ENCODE measurements at regions of chr7 and their contacts with region 1.

Region 1: DNA sequence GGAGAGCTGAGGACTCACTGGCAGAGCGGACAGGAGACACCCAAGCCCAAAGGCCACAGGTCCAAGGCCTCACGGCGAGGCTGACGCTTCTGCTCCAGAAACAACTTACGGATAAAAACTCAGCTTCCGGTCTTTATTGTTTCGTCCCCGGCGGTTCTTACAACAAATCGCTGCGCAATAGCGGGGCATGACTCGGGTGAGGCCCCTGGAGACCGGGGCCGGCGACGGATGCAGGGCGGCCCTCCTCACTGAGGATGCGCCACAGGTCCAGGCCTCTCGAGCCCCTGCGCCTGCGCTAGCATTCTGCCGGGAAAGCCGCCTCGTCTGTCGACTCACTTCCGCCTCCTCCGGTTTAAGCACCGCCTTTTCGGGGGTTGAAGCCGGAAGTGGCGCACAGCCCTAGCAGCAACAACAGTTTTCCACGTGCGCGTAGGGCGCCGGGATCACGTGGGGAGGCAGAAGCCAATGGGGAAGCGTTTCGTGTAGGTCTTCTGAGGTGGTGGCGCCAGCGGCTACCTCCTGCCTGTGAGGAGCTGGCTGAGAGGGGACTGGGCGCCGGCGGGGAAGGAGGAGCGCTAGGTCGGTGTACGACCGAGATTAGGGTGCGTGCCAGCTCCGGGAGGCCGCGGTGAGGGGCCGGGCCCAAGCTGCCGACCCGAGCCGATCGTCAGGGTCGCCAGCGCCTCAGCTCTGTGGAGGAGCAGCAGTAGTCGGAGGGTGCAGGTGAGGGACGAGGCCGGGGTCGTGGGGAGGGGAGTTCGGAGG is at the starts of genes DNAJB9 and THAP5:
- DNase-seq: peak; percentile 100
- ATAC-seq: peak; percentile 99
- total RNA-seq, gene DNAJB9: 34.4 TPM
- total RNA-seq, gene THAP5: 20.3 TPM

Region 2: GRCh38 chr7:108486291-108486966 is 83.1 kb before region 1 on chr7:
- intact Hi-C with region 1: no loop called
- DNase-seq: no peak
- ATAC-seq: no peak

Region 3: DNA sequence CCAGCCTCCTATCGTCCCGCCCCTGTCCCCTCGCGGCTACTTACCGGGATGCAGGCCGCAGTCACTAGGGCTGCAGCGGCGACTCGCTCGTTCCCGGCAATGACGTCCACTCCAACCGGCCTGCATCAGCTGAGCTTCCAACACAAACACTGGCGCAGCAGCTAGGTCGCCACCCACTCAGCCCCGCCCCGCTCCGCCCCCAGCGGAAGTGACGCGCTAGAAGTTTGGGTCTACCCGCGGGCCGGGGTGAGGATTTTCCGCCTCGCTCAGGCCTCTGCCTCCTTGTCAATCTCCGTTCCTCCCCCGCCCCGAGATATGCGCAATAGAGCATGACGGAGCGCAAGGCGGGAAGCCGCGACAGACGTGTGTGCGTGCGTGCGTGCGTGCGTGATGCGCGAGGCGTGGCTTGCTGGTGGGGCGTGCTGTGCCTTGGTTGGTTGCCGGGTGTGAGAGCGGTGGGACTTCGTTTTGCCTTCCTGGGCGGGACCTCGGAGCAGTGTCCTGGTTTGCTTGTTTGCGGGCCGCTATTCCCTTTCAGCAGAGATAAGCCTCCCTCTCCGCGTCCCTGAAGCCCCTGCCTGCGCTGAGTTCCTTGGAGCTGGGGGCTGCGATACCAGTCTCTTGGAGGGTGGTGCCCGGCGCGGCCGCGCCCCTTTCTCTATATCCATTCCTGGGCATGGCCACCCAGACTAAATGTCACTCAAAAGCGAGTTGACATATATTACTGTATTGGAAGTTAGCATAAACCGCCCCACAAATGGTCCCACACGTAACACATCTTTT is 43.4 kb before region 1 on chr7 and contains the start of gene PNPLA8:
- intact Hi-C with region 1: loop called (anchors 1 kb)
- DNase-seq: peak; percentile 100
- ATAC-seq: peak; percentile 97
- total RNA-seq, gene PNPLA8: 31.1 TPM

Region 4: GRCh38 chr7:108613112-108613759 is 43.7 kb after region 1 on chr7:
- intact Hi-C with region 1: no loop called
- DNase-seq: no peak
- ATAC-seq: no peak